Caco-2 (cell line): ENCODE measurements at regions of chr9 and their contacts with region 1.

Region 1: GRCh38 chr9:347667-348292 is 133.1 kb downstream of the DOCK8 start:
- DNase-seq: peak in 1 of 2 experiments; percentile 49
- H3K4me3 ChIP-seq: no peak overlapping the region
- H3K4me3 Mint-ChIP-seq: no peak overlapping the region
- H3K27ac Mint-ChIP-seq: no peak overlapping the region
- H3K4me1 ChIP-seq: no peaks in the 10 kb centered on the region
- H3K4me1 Mint-ChIP-seq: no peaks in the 10 kb centered on the region
- H3K27me3 ChIP-seq: no peaks in the 10 kb centered on the region
- H3K27me3 Mint-ChIP-seq: no peaks in the 10 kb centered on the region
- CTCF ChIP-seq: peak; percentile 67 to 77

Region 2: DNA sequence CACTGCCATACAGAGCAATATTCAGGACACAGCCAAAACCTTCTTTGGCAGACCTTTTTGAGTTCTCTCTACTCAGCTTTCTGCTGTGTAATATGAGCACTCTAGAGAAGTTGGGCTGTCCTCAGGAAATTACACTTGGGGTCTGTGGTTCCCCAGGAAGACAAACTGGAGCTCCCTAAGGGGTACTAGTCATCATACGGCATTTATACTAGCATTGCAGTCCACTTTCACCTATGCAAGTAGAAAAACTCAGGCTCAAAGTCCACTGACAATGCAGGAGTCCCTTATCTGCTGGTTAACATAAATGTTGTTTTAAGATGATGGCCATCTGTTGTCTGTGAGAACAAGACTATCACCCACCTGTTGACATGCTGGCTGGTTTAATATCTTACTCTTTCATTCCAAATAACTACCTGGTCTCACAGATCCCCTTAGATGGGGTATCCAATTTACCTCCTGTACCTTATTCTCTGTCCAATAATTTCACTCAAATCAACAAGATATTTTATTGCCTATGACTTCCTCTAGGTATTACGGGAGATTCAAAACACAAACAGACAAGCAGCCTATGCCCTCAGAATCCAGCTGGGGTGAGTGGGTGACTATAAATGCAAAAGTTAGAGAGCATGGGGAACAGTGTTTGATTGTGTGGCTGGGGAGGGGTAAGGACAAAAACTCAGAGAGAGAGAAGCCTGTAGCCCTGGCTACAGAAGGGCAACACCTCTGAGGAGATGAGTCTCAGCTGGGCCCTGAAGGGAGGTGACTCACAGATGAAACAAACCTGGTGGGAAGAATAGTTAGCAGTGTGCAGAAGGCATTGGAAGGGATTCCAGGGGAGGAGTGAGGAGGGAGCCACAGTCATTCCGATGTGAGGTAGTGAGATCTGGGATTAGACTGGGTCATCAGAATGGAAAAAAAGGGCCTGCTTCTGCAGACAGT is 122.9 kb before region 1 on chr9:
- CTCF ChIA-PET with region 1: no interaction called
- POLR2A ChIA-PET with region 1: no interaction called
- intact Hi-C with region 1: no loop called
- DNase-seq: peak; percentile 29 to 37
- H3K4me3 ChIP-seq: no peak overlapping the region
- H3K4me3 Mint-ChIP-seq: no peak overlapping the region
- H3K27ac Mint-ChIP-seq: no peak overlapping the region
- H3K4me1 ChIP-seq: peaks cover 35% of the 10 kb centered on the region
- H3K4me1 Mint-ChIP-seq: peaks cover 14% of the 10 kb centered on the region
- H3K27me3 ChIP-seq: no peaks in the 10 kb centered on the region
- H3K27me3 Mint-ChIP-seq: no peaks in the 10 kb centered on the region
- CTCF ChIP-seq: no peak

Region 3: DNA sequence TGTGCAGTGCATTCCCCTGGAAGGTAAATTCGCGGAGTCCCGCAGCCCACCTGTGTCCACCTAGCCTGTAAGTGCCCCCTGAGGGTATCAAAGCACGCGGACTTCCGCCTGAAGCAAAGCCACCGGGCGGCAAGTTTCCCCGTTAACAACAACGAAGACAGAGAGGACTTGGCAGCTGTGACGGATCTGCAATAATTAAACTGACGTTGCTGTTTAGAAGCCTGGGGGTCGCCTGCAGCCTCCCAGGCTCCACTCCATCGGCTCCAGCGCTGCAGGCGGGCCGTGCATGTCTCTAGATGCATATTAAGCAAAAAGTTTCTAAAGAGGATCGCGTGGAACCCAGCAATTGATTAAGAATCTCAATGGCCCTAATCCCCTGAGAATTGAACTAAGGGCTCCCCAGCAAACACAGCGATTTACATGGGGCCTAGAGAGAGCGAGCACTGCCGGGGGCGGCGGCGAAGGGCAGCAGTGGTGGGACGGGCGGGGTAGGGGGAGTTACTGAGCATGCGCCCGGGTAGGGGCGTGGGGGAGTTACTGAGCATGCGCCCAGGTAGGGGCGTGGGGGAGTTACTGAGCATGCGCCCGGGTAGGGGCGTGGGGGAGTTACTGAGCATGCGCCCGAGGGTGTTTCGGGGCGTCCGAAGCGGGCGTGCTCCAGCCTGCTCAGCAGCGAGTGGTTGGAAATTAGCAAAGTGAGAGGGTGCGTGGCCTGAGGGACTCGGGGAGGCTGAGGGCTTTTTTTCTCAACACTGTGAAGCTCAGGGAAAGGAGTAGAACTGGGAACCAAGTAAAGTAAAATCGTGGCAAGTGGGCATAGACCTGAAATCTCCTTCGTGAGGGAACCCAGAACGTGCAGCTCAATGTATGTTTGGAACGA is 122.1 kb after region 1 on chr9:
- CTCF ChIA-PET with region 1: no interaction called
- POLR2A ChIA-PET with region 1: no interaction called
- intact Hi-C with region 1: no loop called
- DNase-seq: peak; percentile 85
- H3K4me3 ChIP-seq: peak overlapping the region; percentile 61
- H3K4me3 Mint-ChIP-seq: peak overlapping the region; percentile 94
- H3K27ac Mint-ChIP-seq: peak overlapping the region; percentile 95
- H3K4me1 ChIP-seq: peaks cover 28% of the 10 kb centered on the region
- H3K4me1 Mint-ChIP-seq: peaks cover 13% of the 10 kb centered on the region
- H3K27me3 ChIP-seq: no peaks in the 10 kb centered on the region
- H3K27me3 Mint-ChIP-seq: no peaks in the 10 kb centered on the region
- CTCF ChIP-seq: no peak

Region 4: DNA sequence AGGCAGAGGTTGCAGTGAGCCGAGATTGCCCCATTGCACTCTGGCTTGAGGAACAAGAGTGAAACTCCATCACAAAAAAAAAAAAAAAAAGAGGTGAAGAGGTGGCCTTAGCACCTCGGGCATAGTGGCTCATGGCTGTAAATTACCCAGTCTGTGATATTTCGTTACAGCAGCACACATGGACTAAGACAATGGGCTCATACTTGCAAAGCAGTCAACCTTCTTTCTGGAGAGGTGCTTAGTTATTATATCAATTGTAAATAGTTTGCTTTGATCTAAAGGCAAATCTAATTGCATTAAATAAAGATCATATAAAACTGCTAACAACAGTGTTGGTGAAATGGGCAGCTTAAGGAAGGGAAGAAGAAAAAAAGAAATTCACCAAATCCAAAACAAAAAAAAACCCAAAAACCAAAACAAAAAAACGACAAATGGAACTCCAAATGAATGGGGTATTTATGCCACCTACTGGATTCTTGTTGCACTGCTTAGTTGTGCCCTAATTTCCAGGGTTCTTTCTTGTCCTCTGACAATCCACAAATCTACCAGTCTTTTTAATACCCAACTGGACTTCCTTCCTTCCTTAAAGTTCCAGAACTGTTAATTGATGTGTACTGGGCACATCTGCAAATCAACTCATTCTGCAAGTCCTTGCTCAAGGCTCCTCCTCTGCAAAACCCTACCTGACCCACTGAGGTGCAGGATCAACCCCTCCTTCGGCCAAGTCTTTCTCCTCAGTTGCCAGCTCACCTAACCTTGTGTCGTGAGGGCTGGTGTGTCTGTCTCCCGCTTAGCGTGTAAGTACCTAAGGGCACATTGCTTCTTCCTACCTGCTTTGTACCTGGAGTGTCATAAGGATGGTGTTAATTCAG is 458.7 kb after region 1 on chr9:
- CTCF ChIA-PET with region 1: no interaction called
- POLR2A ChIA-PET with region 1: no interaction called
- intact Hi-C with region 1: loop called (anchors 5 kb)
- DNase-seq: peak in 1 of 2 experiments; percentile 27
- H3K4me3 ChIP-seq: no peak overlapping the region
- H3K4me3 Mint-ChIP-seq: no peak overlapping the region
- H3K27ac Mint-ChIP-seq: no peak overlapping the region
- H3K4me1 ChIP-seq: no peaks in the 10 kb centered on the region
- H3K4me1 Mint-ChIP-seq: peaks cover 5% of the 10 kb centered on the region
- H3K27me3 ChIP-seq: no peaks in the 10 kb centered on the region
- H3K27me3 Mint-ChIP-seq: no peaks in the 10 kb centered on the region
- CTCF ChIP-seq: peak; percentile 58 to 63